ENCODE measurements at regions of chr9 and their contacts with region 1.

Region 1: GRCh38 chr9:126500684-126501382 is 112.9 kb upstream of the LMX1B start:
- DNase-seq: peak; percentile 89
- H3K4me3 ChIP-seq: no peak overlapping the region
- H3K27ac ChIP-seq: no peak overlapping the region
- H3K4me1 ChIP-seq: peaks cover 0 to 26% (median 23%) of the 10 kb centered on the region in 4 donors
- H3K27me3 ChIP-seq: no peaks in the 10 kb centered on the region
- CTCF ChIP-seq: peak; percentile 79 to 93 (median 85)
- EP300 ChIP-seq: no peak
- POLR2A ChIP-seq: no peak

Region 2: DNA sequence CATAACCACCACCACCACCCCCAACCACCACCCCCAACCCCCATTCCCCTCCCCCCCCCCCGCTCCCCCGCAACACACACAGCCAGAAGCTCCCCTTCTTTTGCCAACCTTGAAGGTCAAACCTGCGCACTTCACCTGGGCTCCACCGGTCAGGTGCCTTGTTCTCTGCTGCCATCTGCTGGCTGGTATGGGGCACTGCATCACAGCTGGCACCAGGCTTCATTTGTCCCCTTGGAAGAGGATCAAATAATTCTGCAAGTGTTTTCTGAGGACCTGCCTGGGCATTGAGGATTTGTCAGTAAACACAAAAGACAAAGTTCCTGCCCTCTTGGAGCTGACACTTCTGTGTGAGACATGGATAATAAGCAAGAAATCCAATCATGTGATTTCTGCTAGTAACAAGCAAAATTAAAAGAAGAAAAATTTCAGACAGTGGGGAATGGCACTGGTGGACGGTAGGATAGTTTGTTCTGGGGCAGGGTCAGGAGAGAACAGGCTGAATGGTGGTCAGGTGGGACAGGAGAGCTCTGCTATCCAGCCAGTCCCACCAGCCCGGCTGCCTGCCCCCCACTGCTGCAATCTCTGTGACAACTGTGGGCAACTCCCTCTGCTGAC is 57.3 kb after region 1 on chr9:
- intact Hi-C with region 1: loop called (anchors 1 kb)
- DNase-seq: peak; percentile 73
- H3K4me3 ChIP-seq: no peak overlapping the region
- H3K27ac ChIP-seq: no peak overlapping the region
- H3K4me1 ChIP-seq: no peaks in the 10 kb centered on the region
- H3K27me3 ChIP-seq: peaks cover 0 to 35% (median 14%) of the 10 kb centered on the region in 3 donors
- CTCF ChIP-seq: peak; percentile 28 to 84 (median 70)
- EP300 ChIP-seq: no peak
- POLR2A ChIP-seq: no peak

Region 3: GRCh38 chr9:126756876-126757415 is 256.1 kb after region 1 on chr9:
- intact Hi-C with region 1: no loop called
- DNase-seq: no peak
- H3K4me3 ChIP-seq: no peak overlapping the region
- H3K27ac ChIP-seq: no peak overlapping the region
- H3K4me1 ChIP-seq: no peaks in the 10 kb centered on the region
- H3K27me3 ChIP-seq: peaks cover 0 to 53% (median 13%) of the 10 kb centered on the region in 3 donors
- CTCF ChIP-seq: no peak
- EP300 ChIP-seq: no peak
- POLR2A ChIP-seq: no peak